Panc1 (cell line): ENCODE measurements at regions of chr15 and their contacts with region 1.

Region 1: GRCh38 chr15:88484682-88485331 is 17.3 kb downstream of the MRPS11 start:
- DNase-seq: no peak
- ATAC-seq: no peak
- H3K4me3 ChIP-seq: no peak overlapping the region
- H3K27ac ChIP-seq: no peak overlapping the region
- H3K4me1 ChIP-seq: no peaks in the 10 kb centered on the region
- H3K27me3 ChIP-seq: no peaks in the 10 kb centered on the region
- CTCF ChIP-seq: no peak

Region 2: DNA sequence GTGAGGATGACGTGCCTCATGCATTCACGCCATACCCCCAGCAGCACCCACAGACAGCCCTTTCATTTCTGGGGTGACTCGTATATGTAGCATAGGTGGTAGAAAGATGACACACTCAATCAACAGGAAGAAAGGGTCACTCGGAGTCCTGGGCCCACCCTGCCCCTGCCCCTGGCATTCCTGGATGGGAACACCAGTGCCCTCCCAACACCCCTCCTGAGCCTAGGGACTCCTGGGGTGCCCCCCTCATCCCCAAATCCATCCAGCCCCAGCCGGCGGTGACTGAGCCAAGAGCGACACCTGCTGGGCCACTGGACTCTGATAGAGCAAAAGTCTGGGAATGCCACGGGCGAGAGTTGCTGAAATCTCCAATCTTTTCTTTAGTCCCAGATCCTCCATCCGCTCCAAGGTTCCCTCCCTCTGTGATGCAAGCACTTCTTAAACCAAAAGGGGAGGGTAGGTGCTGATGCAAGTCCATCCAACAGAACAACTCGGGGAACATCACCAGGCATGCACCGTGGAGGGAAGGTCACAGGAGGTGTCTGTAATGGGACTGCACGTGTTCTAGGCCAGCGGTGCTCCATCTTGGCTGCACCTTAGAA is 349.5 kb after region 1 on chr15:
- CTCF ChIA-PET with region 1: no interaction called
- POLR2A ChIA-PET with region 1: no interaction called
- in situ Hi-C with region 1: no loop called
- intact Hi-C with region 1: loop called (anchors 10 kb)
- DNase-seq: no peak
- ATAC-seq: peak; percentile 83
- H3K4me3 ChIP-seq: no peak overlapping the region
- H3K27ac ChIP-seq: no peak overlapping the region
- H3K4me1 ChIP-seq: no peaks in the 10 kb centered on the region
- H3K27me3 ChIP-seq: no peaks in the 10 kb centered on the region
- CTCF ChIP-seq: peak; percentile 92